AG04449 (cell line): ENCODE measurements at regions of chr9 and their contacts with region 1.

Region 1: GRCh38 chr9:86434039-86434726 is 80.0 kb upstream of the TUT7 start:
- DNase-seq: no peak
- H3K4me3 ChIP-seq: peak overlapping the region; percentile 40
- CTCF ChIP-seq: peak; percentile 72

Region 2: DNA sequence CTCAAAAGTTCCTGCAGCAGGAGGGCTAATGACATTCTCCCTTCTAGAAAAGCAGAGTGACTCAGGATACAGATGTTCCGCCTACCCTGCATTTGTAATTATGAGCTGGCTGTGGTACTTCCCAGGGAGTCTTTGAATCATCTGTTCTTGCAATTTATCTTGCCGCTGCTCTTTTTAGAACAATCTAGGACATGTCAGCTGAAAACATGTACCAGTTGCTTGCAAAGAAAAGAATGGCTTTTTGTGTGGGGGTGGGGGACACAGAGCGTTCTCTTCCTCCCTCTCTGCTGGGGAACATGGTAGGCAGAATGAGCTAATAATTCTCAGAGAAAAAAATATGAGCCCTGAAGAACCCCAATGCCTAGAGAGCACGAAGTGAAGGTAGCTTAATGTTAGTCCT is 28.3 kb before region 1 on chr9:
- CTCF ChIA-PET with region 1: interaction called, 18 read pairs
- POLR2A ChIA-PET with region 1: no interaction called
- DNase-seq: peak; percentile 55
- H3K4me3 ChIP-seq: peak overlapping the region; percentile 32
- CTCF ChIP-seq: no peak

Region 3: DNA sequence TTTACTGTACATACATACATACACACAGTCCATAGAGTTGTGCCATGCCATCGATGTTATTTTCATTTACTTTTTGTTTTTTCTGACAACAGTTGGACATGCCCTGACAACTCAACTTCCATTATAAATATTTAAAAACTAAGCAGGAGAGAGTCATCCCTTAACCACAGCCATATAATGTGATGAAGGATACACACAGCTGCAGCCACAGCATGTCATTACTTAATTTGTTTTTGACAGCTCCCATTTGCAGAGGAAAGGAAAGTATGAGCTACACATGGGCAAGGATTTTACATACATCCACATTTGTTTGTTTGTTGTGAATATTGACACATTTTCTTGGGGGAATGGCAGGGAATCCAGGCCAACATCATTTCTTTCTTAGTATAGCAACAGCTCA is 11.5 kb after region 1 on chr9:
- CTCF ChIA-PET with region 1: interaction called, 26 read pairs
- POLR2A ChIA-PET with region 1: no interaction called
- DNase-seq: no peak
- H3K4me3 ChIP-seq: no peak overlapping the region
- CTCF ChIP-seq: no peak

Region 4: GRCh38 chr9:86486891-86487837 is 53.0 kb after region 1 on chr9:
- CTCF ChIA-PET with region 1: interaction called, 25 read pairs
- POLR2A ChIA-PET with region 1: no interaction called
- DNase-seq: peak; percentile 26
- H3K4me3 ChIP-seq: no peak overlapping the region
- CTCF ChIP-seq: peak; percentile 49

Region 5: DNA sequence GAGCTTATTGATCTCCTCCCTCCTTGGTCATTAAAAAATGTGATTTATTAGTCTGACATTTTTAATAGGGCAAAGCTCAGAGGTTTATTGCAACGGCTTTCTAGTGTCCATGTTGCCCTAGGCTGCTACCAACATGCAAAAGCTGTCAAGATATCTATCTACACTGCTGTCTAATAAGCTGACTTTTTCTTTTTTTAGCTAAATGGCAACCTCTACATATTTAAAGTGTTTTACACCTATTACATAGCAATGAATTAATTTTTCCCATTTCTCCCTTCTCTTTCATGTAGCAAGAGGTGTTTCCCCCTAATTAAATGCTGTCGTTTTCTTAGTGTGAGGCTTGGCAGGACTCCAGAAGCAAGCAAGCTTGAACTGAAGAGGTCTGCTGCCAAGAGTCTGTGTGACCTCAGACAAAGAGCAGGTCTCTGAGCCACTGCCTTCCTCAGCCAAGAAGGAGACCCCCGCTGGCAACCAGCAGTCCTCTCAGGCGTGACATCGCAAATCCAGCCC is 433.7 kb after region 1 on chr9:
- CTCF ChIA-PET with region 1: no interaction called
- POLR2A ChIA-PET with region 1: no interaction called
- DNase-seq: no peak
- H3K4me3 ChIP-seq: no peak overlapping the region
- CTCF ChIP-seq: no peak

Region 6: GRCh38 chr9:87336914-87337333 is 902.7 kb after region 1 on chr9:
- CTCF ChIA-PET with region 1: interaction called, 11 read pairs
- POLR2A ChIA-PET with region 1: no interaction called
- DNase-seq: peak; percentile 51
- H3K4me3 ChIP-seq: peak overlapping the region; percentile 51
- CTCF ChIP-seq: peak; percentile 46